ENCODE measurements at regions of chr3 and their contacts with region 1.

Region 1: GRCh38 chr3:98593046-98593936 is at the start of gene CPOX:
- DNase-seq: peak; percentile 87
- H3K4me3 Mint-ChIP-seq: peak within 1 kb of the TSS; percentile 92
- H3K27ac Mint-ChIP-seq: peak within 1 kb of the TSS; percentile 93
- H3K4me1 Mint-ChIP-seq: peaks cover 44% of the 10 kb centered on the region
- H3K27me3 Mint-ChIP-seq: no peaks in the 10 kb centered on the region
- total RNA-seq, gene CPOX: 48.4 and 50.4 TPM in 2 replicates

Region 2: GRCh38 chr3:98188545-98188944 is 404.7 kb before region 1 on chr3:
- intact Hi-C with region 1: loop called (anchors 10 kb)
- DNase-seq: no peak
- H3K4me3 Mint-ChIP-seq: no peak overlapping the region
- H3K27ac Mint-ChIP-seq: no peak overlapping the region
- H3K4me1 Mint-ChIP-seq: peaks cover 4% of the 10 kb centered on the region
- H3K27me3 Mint-ChIP-seq: peaks cover 12% of the 10 kb centered on the region

Region 3: GRCh38 chr3:98556164-98557130 is 36.8 kb before region 1 on chr3:
- intact Hi-C with region 1: loop called (anchors 1 kb)
- DNase-seq: peak; percentile 84
- H3K4me3 Mint-ChIP-seq: peak overlapping the region; percentile 77
- H3K27ac Mint-ChIP-seq: peak overlapping the region; percentile 93
- H3K4me1 Mint-ChIP-seq: peaks cover 75% of the 10 kb centered on the region
- H3K27me3 Mint-ChIP-seq: no peaks in the 10 kb centered on the region

Region 4: DNA sequence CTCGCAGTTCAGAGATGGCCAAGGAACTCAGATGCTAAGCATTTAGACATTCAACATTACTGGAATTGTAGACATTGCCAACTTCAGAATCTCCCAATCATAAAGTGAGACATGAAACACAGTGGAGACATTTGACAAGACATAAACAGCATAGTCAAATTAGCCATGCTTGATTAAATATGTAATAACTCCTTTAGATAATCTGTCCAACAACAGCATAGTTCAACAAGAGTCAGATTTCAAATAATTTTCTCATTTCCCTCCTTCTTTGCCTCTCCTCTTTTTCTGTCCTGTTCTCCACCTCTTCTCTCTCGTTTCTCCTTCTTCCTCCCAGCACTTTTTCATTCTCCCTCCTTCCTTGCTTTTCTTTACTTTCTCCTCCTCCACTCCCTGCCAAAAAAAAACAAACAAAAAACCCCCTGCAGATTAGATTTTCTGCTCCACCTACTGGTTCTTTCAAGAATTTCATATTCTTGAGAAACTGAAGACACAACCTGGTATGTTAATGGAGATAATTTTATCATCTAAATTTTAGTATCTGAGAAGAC is 20.0 kb before region 1 on chr3:
- intact Hi-C with region 1: loop called (anchors 2 kb)
- DNase-seq: no peak
- H3K4me3 Mint-ChIP-seq: peak overlapping the region; percentile 47
- H3K27ac Mint-ChIP-seq: peak overlapping the region; percentile 71
- H3K4me1 Mint-ChIP-seq: peaks cover 57% of the 10 kb centered on the region
- H3K27me3 Mint-ChIP-seq: no peaks in the 10 kb centered on the region

Region 5: GRCh38 chr3:98628317-98628716 is 35.0 kb after region 1 on chr3:
- intact Hi-C with region 1: no loop called
- DNase-seq: no peak
- H3K4me3 Mint-ChIP-seq: no peak overlapping the region
- H3K27ac Mint-ChIP-seq: no peak overlapping the region
- H3K4me1 Mint-ChIP-seq: no peaks in the 10 kb centered on the region
- H3K27me3 Mint-ChIP-seq: no peaks in the 10 kb centered on the region

Region 6: DNA sequence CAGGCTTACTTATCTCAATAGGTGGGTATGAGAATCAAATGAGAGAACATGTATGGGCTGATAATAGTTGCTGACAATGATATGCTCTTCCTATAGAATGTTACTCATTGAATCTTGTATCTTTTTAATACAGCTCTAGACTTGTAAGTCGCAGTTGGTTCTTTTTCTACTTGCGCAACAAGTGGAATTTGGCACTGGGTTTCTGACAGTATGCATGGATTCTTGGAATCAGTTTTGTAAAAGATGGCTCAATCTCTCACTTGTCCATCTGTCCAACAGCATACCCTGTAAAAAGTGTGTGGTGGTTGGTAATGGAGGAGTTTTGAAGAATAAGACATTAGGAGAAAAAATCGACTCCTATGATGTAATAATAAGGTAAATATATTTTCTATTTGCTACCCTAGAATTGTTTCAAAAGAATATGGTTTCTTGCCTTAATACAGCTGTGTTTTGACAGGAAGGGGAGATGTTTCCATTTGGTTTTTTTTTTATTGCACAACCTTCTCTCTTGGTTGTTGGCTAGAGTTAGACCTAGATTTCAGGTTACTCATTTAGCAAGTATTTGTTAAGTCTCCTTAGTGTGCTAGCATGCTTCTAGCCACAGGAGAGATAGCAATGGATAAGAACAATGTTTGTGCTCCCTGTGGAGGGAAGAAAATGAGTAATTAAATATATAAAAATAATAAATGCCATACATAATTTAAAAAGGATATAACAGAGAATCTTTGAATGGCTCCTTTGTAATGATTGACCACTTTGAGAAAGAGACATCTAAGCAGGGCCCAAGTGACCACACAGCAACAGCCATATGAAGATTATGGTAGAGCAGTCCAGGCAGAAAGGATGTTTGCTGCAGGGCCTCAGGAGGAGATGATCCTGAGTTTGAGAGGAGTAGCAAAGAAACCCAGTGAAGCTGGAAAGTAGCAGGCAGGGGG is 191.6 kb after region 1 on chr3:
- intact Hi-C with region 1: loop called (anchors 10 kb)
- DNase-seq: no peak
- H3K4me3 Mint-ChIP-seq: no peak overlapping the region
- H3K27ac Mint-ChIP-seq: no peak overlapping the region
- H3K4me1 Mint-ChIP-seq: peaks cover 35% of the 10 kb centered on the region
- H3K27me3 Mint-ChIP-seq: no peaks in the 10 kb centered on the region

Region 7: GRCh38 chr3:98901392-98902350 is 308.4 kb after region 1 on chr3 and contains the start of gene DCBLD2:
- intact Hi-C with region 1: loop called (anchors 5 kb)
- DNase-seq: peak; percentile 95
- H3K4me3 Mint-ChIP-seq: peak within 1 kb of the TSS; percentile 83
- H3K27ac Mint-ChIP-seq: peak within 1 kb of the TSS; percentile 57
- H3K4me1 Mint-ChIP-seq: peaks cover 14% of the 10 kb centered on the region
- H3K27me3 Mint-ChIP-seq: peaks cover 20% of the 10 kb centered on the region
- total RNA-seq, gene DCBLD2: 4.2 and 5.1 TPM in 2 replicates

Region 8: DNA sequence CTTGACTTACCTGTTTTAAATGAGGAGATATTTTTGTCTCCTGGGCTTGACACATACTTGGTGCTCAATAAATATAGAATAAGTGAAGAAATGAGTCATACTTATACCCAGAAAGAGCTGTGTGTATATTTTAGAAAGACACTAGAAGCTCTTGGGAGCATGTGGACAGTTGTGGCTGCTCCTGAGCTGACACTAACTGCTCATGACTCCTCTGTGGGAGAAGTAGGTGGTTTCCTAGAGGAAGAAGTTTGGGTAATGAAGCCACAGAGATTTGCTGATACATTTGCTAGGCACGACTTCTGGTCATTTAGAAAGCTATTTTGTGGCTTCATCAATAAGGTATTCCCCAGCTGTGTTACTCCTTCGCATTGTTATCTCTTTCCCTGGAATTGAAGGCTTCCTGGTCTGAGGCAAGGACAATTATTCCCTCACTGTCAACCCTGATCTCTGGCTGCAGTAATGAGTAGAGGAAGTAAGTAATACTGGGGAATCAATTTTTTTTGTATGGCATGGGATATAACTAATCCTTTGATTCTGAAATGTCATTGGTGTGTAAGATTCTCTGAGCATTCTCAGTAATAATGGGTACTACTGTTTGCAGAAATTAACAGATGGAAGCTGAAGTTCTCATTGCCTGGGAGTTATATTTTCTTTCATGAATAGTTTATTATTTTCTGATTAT is 387.8 kb after region 1 on chr3:
- intact Hi-C with region 1: loop called (anchors 10 kb)
- DNase-seq: no peak
- H3K4me3 Mint-ChIP-seq: no peak overlapping the region
- H3K27ac Mint-ChIP-seq: no peak overlapping the region
- H3K4me1 Mint-ChIP-seq: peaks cover 21% of the 10 kb centered on the region
- H3K27me3 Mint-ChIP-seq: peaks cover 15% of the 10 kb centered on the region

Measured in activated T-helper 2 cell treated with anti-CD3 and anti-CD28 coated beads, Interferon-gamma antibody, Interleukin-2, Interleukin-4, amounts not matched to agents 10 μg/mL and 5 μg/mL and 100 μg/mL, durations not matched to agents 14 hours and 24 hours and 36 hours (primary cell).